Mammary epithelial cell (primary cell): ENCODE measurements at regions of chr10 and their contacts with region 1.

Region 1: DNA sequence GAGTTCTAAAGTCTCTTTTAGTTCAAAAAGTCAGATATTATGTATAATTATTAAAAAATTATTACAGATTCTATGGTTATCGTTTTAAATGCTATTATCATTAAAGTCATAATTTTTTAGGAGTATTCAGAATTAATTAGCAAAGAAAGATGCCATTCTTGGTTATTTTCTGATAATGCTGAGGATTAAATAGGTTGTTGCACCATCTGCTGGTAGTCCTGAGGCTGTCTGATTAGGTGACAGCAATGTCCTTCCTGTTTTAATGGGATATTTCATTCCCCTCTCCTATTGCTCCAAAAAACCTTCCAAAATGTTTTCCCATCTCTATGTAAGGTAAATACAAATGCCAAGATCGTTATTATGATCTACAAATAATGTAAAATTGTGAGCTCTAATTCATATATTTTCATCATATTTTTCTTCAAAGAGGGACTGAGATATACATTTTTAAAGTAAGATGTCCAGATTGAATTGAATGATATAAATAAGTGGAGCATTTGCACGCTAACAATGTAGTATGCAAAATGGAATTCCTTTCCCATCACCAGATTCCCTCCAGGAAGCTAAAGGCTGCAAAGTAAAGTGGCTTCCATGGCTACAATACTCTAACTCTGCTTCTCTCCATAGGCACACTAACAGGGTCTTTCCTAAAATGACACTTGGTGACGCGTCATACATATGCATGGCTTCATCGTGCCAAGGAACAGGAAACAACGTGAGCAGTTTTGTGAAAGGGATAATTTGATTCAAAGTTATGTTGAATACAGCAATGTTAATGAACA is 58.8 kb upstream of the AKR1E2 start:
- DNase-seq: peak; percentile 46
- H3K4me3 ChIP-seq: no peak overlapping the region
- H3K27ac ChIP-seq: peak overlapping the region; percentile 96
- H3K4me1 ChIP-seq: peaks cover 63% of the 10 kb centered on the region
- H3K27me3 ChIP-seq: no peaks in the 10 kb centered on the region
- CTCF ChIP-seq: peak; percentile 71 to 76

Region 2: DNA sequence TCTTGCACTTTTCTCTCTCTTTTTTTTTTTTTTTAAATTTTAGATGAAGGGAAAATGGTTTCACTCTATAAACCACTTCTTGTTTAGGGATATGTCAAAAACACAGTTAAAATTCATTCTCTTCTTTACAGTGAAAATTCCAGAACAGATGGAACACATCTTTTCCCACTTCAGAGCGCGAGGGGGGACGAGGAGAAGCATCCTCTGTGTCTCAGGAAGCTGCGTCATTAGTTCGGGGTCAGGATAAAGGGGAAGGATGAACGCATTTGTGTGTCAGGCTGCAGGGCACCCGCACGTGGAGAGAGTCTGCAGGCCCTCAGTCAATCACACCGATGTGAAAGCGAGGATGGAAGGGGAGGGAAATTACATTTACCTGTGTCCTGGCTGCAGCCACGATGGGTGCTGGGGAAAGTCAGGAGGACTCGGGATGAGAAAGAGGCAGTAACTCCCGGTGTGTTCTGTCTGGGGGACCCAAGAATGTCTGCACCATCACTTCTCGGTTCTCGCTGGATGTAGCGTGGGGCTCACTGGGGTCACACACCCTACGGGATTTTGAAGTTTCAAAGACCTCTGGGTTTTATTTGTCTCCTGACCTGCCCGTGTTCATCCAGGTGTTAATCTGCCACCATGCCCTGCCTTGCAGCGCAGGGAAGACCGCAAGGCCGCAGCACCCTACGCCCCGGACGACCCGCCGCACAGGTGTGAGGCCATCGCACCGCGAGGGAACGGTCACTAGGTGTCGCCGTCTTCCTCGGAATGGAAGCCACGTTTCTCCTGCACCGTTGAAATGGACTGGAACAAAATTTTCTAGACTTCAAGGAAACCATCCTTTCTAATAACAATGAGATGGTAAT is 1527.9 kb before region 1 on chr10:
- CTCF ChIA-PET with region 1: no interaction called
- dilution Hi-C with region 1: no loop called
- in situ Hi-C with region 1: loop called in 1 of 2 experiments (anchors 25 kb)
- intact Hi-C with region 1: loop called (anchors 1 kb)
- DNase-seq: peak; percentile 26
- H3K4me3 ChIP-seq: no peak overlapping the region
- H3K27ac ChIP-seq: no peak overlapping the region
- H3K4me1 ChIP-seq: no peaks in the 10 kb centered on the region
- H3K27me3 ChIP-seq: no peaks in the 10 kb centered on the region
- CTCF ChIP-seq: peak; percentile 73 to 83

Region 3: DNA sequence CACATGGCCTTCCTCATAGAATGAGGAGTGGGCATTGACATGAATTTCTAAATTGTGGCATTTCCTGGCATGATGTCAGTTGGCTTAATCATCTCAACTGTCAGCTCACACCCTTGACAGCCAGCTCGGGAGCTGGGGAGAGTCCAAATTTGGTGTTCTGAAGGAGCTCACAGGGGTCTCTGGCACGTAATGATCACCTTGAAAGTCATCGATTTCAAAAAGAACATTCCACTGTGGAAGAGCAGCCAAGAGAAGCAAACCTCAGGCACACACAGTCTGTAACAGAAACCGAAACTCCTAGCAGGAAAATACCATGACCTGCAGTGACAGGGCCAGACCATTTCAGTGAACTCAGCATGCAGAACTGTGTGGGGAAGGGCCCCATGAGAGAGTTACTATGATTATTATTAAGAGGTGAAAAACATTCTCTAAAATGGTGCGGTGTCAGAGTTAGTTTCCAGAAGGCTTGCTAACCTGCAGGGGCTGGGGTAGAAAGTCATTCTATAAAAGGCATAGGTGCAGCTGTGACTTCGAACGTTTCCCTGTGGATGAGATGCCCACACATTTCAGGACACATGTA is 955.8 kb before region 1 on chr10:
- CTCF ChIA-PET with region 1: no interaction called
- dilution Hi-C with region 1: loop called (anchors 10 kb)
- in situ Hi-C with region 1: no loop called
- intact Hi-C with region 1: loop called (anchors 1 kb)
- DNase-seq: peak; percentile 98
- H3K4me3 ChIP-seq: no peak overlapping the region
- H3K27ac ChIP-seq: peak overlapping the region; percentile 100
- H3K4me1 ChIP-seq: peaks cover 50% of the 10 kb centered on the region
- H3K27me3 ChIP-seq: no peaks in the 10 kb centered on the region
- CTCF ChIP-seq: no peak

Region 4: GRCh38 chr10:4344511-4344994 is 422.7 kb before region 1 on chr10:
- CTCF ChIA-PET with region 1: no interaction called
- dilution Hi-C with region 1: no loop called
- in situ Hi-C with region 1: no loop called
- intact Hi-C with region 1: loop called (anchors 2 kb)
- DNase-seq: peak; percentile 99
- H3K4me3 ChIP-seq: no peak overlapping the region
- H3K27ac ChIP-seq: peak overlapping the region; percentile 90
- H3K4me1 ChIP-seq: peaks cover 16% of the 10 kb centered on the region
- H3K27me3 ChIP-seq: no peaks in the 10 kb centered on the region
- CTCF ChIP-seq: no peak

Region 5: DNA sequence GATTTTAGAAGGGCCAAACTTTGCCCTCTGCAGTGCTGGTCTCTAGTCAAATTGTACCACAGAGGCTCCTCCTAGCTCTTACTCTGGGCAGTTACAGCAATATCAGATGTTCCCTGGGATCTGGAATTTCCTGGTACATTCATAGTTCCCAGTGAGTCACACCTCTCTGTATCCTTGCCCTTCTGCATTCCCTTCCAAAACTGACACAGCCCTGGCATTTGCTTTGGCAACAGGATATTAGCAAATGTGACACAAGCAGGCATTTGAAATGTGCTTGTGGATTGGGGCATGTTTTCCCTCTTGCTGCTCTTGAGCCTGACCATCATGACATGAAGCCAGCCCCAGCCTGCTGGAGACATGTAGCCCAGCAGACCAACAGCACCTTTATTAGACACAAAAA is 225.9 kb before region 1 on chr10:
- CTCF ChIA-PET with region 1: no interaction called
- dilution Hi-C with region 1: loop called (anchors 10 kb)
- in situ Hi-C with region 1: no loop called
- intact Hi-C with region 1: no loop called
- DNase-seq: peak; percentile 97
- H3K4me3 ChIP-seq: no peak overlapping the region
- H3K27ac ChIP-seq: peak overlapping the region; percentile 98
- H3K4me1 ChIP-seq: peaks cover 20% of the 10 kb centered on the region
- H3K27me3 ChIP-seq: no peaks in the 10 kb centered on the region
- CTCF ChIP-seq: peak; percentile 11 to 54

Region 6: GRCh38 chr10:4678023-4678950 is 88.9 kb before region 1 on chr10:
- CTCF ChIA-PET with region 1: interaction called, 3 read pairs
- dilution Hi-C with region 1: loop called (anchors 5 kb)
- in situ Hi-C with region 1: loop called in 1 of 2 experiments (anchors 25 kb)
- intact Hi-C with region 1: no loop called
- DNase-seq: peak; percentile 94
- H3K4me3 ChIP-seq: peak overlapping the region in 2 of 3 experiments; percentile 46 to 61
- H3K27ac ChIP-seq: peak overlapping the region; percentile 100
- H3K4me1 ChIP-seq: peaks cover 43% of the 10 kb centered on the region
- H3K27me3 ChIP-seq: no peaks in the 10 kb centered on the region
- CTCF ChIP-seq: no peak

Region 7: GRCh38 chr10:4813023-4813422 is 45.8 kb after region 1 on chr10:
- CTCF ChIA-PET with region 1: interaction called, 3 read pairs
- dilution Hi-C with region 1: no loop called
- in situ Hi-C with region 1: no loop called
- intact Hi-C with region 1: loop called (anchors 2 kb)
- DNase-seq: peak; percentile 89
- H3K4me3 ChIP-seq: no peak overlapping the region
- H3K27ac ChIP-seq: peak overlapping the region; percentile 38
- H3K4me1 ChIP-seq: peaks cover 27% of the 10 kb centered on the region
- H3K27me3 ChIP-seq: no peaks in the 10 kb centered on the region
- CTCF ChIP-seq: no peak